ENCODE measurements at regions of chr7 and their contacts with region 1.

Region 1: GRCh38 chr7:155882596-155882995 is 70.3 kb upstream of the SHH start:
- DNase-seq: peak; percentile 83
- ATAC-seq: peak; percentile 70
- H3K4me3 ChIP-seq: no peak overlapping the region
- H3K27ac ChIP-seq: peak overlapping the region; percentile 79
- H3K4me1 ChIP-seq: peaks cover 38% of the 10 kb centered on the region
- H3K27me3 ChIP-seq: no peaks in the 10 kb centered on the region
- CTCF ChIP-seq: no peak

Region 2: GRCh38 chr7:155860840-155861479 is 21.6 kb before region 1 on chr7:
- CTCF ChIA-PET with region 1: no interaction called
- POLR2A ChIA-PET with region 1: no interaction called
- intact Hi-C with region 1: loop called (anchors 1 kb)
- DNase-seq: peak; percentile 90
- ATAC-seq: peak; percentile 29
- H3K4me3 ChIP-seq: peak overlapping the region; percentile 44
- H3K27ac ChIP-seq: peak overlapping the region; percentile 66
- H3K4me1 ChIP-seq: peaks cover 42% of the 10 kb centered on the region
- H3K27me3 ChIP-seq: no peaks in the 10 kb centered on the region
- CTCF ChIP-seq: no peak

Region 3: GRCh38 chr7:155931396-155932085 is 48.9 kb after region 1 on chr7:
- CTCF ChIA-PET with region 1: no interaction called
- POLR2A ChIA-PET with region 1: no interaction called
- intact Hi-C with region 1: no loop called
- DNase-seq: no peak
- ATAC-seq: no peak
- H3K4me3 ChIP-seq: no peak overlapping the region
- H3K27ac ChIP-seq: no peak overlapping the region
- H3K4me1 ChIP-seq: no peaks in the 10 kb centered on the region
- H3K27me3 ChIP-seq: no peaks in the 10 kb centered on the region
- CTCF ChIP-seq: no peak

Region 4: GRCh38 chr7:156039971-156040677 is 157.5 kb after region 1 on chr7:
- CTCF ChIA-PET with region 1: no interaction called
- POLR2A ChIA-PET with region 1: no interaction called
- intact Hi-C with region 1: loop called (anchors 5 kb)
- DNase-seq: no peak
- ATAC-seq: no peak
- H3K4me3 ChIP-seq: no peak overlapping the region
- H3K27ac ChIP-seq: no peak overlapping the region
- H3K4me1 ChIP-seq: peaks cover 21% of the 10 kb centered on the region
- H3K27me3 ChIP-seq: no peaks in the 10 kb centered on the region
- CTCF ChIP-seq: no peak

Region 5: GRCh38 chr7:156096771-156097538 is 214.4 kb after region 1 on chr7:
- CTCF ChIA-PET with region 1: no interaction called
- POLR2A ChIA-PET with region 1: no interaction called
- intact Hi-C with region 1: no loop called
- DNase-seq: no peak
- ATAC-seq: no peak
- H3K4me3 ChIP-seq: no peak overlapping the region
- H3K27ac ChIP-seq: no peak overlapping the region
- H3K4me1 ChIP-seq: peaks cover 5% of the 10 kb centered on the region
- H3K27me3 ChIP-seq: no peaks in the 10 kb centered on the region
- CTCF ChIP-seq: no peak

Measured in PC-3 (cell line).